Left ventricle myocardium inferior (tissue), 1 donor: ENCODE measurements at regions of chr12 and their contacts with region 1.

Region 1: DNA sequence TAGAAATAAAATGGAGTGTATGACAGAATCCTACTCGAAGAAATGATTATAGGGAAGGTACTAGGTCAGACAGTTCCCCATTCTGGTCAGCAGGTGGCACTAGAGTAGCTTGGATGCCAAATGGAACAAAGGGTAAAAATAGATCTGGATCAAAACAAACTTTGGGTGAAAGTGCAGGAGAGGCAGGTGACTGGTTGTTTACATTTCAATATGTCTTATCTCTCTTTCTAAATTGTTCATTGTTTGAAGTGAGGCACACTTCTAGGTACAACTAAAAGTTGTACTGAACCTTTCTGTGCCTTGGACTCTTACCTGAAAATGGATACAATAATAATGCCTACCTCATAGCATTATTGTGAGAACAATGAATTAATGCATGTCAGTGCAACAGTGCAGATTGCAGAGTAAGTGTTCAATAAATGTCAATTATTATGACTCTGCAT is 62.0 kb upstream of the OSBPL8 start:
- DNase-seq: peak; percentile 41
- H3K4me3 ChIP-seq: no peak overlapping the region
- H3K27ac ChIP-seq: no peak overlapping the region
- H3K4me1 ChIP-seq: peaks cover 12% of the 10 kb centered on the region
- H3K27me3 ChIP-seq: no peaks in the 10 kb centered on the region
- CTCF ChIP-seq: no peak

Region 2: GRCh38 chr12:76790564-76791552 is 169.3 kb after region 1 on chr12:
- intact Hi-C with region 1: loop called (anchors 1 kb)
- DNase-seq: no peak
- H3K4me3 ChIP-seq: no peak overlapping the region
- H3K27ac ChIP-seq: no peak overlapping the region
- H3K4me1 ChIP-seq: peaks cover 81% of the 10 kb centered on the region
- H3K27me3 ChIP-seq: no peaks in the 10 kb centered on the region
- CTCF ChIP-seq: peak; percentile 78

Region 3: DNA sequence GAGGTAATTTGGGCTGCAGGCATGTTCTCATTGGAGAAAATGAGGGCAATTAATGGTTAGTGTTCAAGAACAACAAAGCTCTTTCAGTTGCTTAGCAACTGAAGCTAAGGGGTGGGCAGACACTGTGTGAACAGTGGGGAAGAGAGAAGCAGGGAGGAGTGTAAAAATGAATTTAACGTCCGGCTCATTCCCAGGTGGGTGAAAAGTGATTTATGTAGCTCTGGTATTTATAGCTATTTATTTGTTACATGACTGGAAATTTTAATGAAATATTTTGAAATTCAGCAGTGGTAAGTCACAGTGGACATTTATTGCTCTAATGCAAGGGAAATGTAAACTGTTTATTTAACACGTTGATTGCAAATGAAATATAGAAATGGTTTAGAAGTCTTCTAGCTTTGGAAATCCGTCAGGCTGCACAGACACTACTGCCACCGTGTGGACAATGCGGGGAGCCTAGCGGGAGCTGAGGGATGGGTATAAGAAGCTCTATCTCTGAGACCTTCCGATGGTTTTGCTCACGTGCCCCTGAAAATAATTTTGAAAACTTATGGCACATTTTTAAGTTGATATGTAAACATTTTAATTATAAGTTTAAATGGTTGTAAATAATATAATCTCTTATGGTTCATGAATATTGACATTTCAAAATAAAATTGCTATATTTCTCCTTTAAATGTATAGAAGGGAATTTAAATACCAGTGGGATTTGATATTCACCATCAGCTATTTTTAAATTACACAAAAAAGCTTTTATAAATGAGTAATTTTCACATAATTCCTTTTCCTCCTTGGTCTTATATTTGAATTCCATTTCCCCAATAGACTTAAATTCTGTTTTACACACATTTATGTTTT is 389.3 kb after region 1 on chr12:
- intact Hi-C with region 1: loop called (anchors 5 kb)
- DNase-seq: peak; percentile 59
- H3K4me3 ChIP-seq: peak overlapping the region; percentile 37
- H3K27ac ChIP-seq: no peak overlapping the region
- H3K4me1 ChIP-seq: peaks cover 5% of the 10 kb centered on the region
- H3K27me3 ChIP-seq: peaks cover 9% of the 10 kb centered on the region
- CTCF ChIP-seq: peak; percentile 97